ENCODE measurements at regions of chr16 and their contacts with region 1.

Region 1: GRCh38 chr16:56681939-56682702 is at the start of gene MT1X:
- DNase-seq: peak; percentile 95
- ATAC-seq: peak; percentile 97
- H3K4me3 Mint-ChIP-seq: peak within 1 kb of the TSS; percentile 86
- H3K27ac Mint-ChIP-seq: peak within 1 kb of the TSS; percentile 97
- H3K4me1 Mint-ChIP-seq: peaks cover 21% of the 10 kb centered on the region
- H3K27me3 Mint-ChIP-seq: no peaks in the 10 kb centered on the region
- CTCF ChIP-seq: no peak
- total RNA-seq, gene MT1X: 52.5 to 54.2 TPM

Region 2: DNA sequence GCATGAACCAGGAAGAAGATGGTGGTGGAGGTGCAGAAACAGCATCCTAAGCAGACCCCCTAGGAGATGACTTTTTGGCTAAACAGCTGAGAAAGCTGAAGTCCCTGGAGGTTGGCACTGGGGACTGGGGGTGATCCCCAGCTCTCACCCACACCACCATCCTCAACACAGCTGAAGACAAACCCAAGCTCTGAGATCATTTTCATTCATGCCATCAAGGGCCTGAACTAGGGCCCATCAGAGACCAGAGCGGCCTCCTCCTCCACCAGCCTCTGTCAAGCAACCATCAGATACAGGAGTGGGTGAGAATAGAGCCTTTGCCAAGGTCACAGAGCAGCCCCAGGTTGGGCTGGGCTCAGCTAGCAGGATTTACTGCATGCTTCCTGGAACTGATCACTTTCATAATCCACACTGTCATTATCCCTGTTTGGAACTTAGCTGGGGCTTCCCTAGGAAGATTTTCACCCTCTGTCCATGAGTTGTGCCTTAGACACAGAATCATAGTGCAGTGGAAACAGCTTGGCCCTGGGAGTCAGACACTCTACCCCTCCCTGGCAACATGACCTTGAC is 112.2 kb before region 1 on chr16:
- CTCF ChIA-PET with region 1: no interaction called
- POLR2A ChIA-PET with region 1: no interaction called
- intact Hi-C with region 1: no loop called
- DNase-seq: no peak
- ATAC-seq: no peak
- H3K4me3 Mint-ChIP-seq: no peak overlapping the region
- H3K27ac Mint-ChIP-seq: no peak overlapping the region
- H3K4me1 Mint-ChIP-seq: no peaks in the 10 kb centered on the region
- H3K27me3 Mint-ChIP-seq: peaks cover 2% of the 10 kb centered on the region
- CTCF ChIP-seq: no peak

Region 3: GRCh38 chr16:56608043-56608875 is 73.9 kb before region 1 on chr16 and contains the start of gene MT2A:
- CTCF ChIA-PET with region 1: interaction called, 3 read pairs
- POLR2A ChIA-PET with region 1: interaction called, 10 read pairs
- intact Hi-C with region 1: loop called (anchors 5 kb)
- DNase-seq: peak; percentile 97
- ATAC-seq: peak; percentile 77
- H3K4me3 Mint-ChIP-seq: peak within 1 kb of the TSS; percentile 81
- H3K27ac Mint-ChIP-seq: peak within 1 kb of the TSS; percentile 94
- H3K4me1 Mint-ChIP-seq: peaks cover 56% of the 10 kb centered on the region
- H3K27me3 Mint-ChIP-seq: no peaks in the 10 kb centered on the region
- CTCF ChIP-seq: no peak
- total RNA-seq, gene MT2A: 141 to 144 TPM

Region 4: GRCh38 chr16:56625140-56625942 is 56.8 kb before region 1 on chr16 and contains the start of gene MT1E:
- CTCF ChIA-PET with region 1: no interaction called
- POLR2A ChIA-PET with region 1: no interaction called
- intact Hi-C with region 1: no loop called
- DNase-seq: peak; percentile 74
- ATAC-seq: peak; percentile 92
- H3K4me3 Mint-ChIP-seq: peak within 1 kb of the TSS; percentile 78
- H3K27ac Mint-ChIP-seq: peak within 1 kb of the TSS; percentile 69
- H3K4me1 Mint-ChIP-seq: peaks cover 15% of the 10 kb centered on the region
- H3K27me3 Mint-ChIP-seq: peaks cover 25% of the 10 kb centered on the region
- CTCF ChIP-seq: no peak
- total RNA-seq, gene MT1E: 22.1 to 23.3 TPM

Region 5: DNA sequence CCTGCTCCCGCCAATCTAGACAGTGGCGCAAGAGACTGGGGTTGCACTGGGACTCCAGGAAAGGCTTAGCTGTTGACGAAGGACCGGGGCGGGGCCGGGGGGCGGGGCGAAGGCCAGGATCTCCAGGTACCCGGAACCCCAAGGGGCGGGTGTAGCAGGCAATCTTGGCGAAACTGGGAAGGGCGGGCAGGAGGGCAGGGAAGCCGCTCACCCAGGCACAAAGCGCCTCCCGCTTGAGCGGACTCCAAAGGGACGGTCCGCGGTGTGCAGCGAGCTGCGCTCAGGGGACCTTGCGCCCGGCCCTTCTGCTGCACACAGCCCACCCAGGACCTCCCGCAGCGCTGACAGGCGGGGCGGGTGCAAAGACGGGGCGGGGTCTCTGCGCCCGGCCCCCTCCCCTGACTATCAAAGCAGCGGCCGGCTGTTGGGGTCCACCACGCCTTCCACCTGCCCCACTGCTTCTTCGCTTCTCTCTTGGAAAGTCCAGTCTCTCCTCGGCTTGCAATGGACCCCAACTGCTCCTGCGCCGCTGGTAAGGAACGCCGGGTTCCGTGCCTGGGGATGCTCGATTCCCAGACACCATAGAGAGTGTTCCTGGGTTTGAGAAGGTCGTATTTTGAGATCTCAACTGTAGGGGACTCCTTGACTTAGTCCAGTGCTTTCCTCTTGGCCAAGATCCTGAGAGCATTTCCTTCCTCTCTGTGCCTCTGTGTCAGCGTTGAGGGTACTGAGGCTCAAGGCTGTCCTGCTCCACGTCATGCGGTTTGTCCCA is 24.4 kb before region 1 on chr16 and contains the start of gene MT1F:
- CTCF ChIA-PET with region 1: no interaction called
- POLR2A ChIA-PET with region 1: interaction called, 10 read pairs
- intact Hi-C with region 1: no loop called
- DNase-seq: peak; percentile 82
- ATAC-seq: peak; percentile 83
- H3K4me3 Mint-ChIP-seq: peak within 1 kb of the TSS; percentile 92
- H3K27ac Mint-ChIP-seq: peak within 1 kb of the TSS; percentile 82
- H3K4me1 Mint-ChIP-seq: peaks cover 14% of the 10 kb centered on the region
- H3K27me3 Mint-ChIP-seq: no peaks in the 10 kb centered on the region
- CTCF ChIP-seq: no peak
- total RNA-seq, gene MT1F: 7.7 to 9.0 TPM

Region 6: GRCh38 chr16:56667581-56668571 is 14.2 kb before region 1 on chr16 and contains the start of gene MT1G:
- CTCF ChIA-PET with region 1: interaction called, 11 read pairs
- POLR2A ChIA-PET with region 1: interaction called, 13 read pairs
- intact Hi-C with region 1: no loop called
- DNase-seq: peak; percentile 58
- ATAC-seq: peak; percentile 75
- H3K4me3 Mint-ChIP-seq: peak within 1 kb of the TSS; percentile 65
- H3K27ac Mint-ChIP-seq: no peak within 1 kb of the TSS
- H3K4me1 Mint-ChIP-seq: peaks cover 20% of the 10 kb centered on the region
- H3K27me3 Mint-ChIP-seq: peaks cover 72% of the 10 kb centered on the region
- CTCF ChIP-seq: no peak
- total RNA-seq, gene MT1G: 35.9 to 39.0 TPM

Measured in activated CD8-positive, alpha-beta T cell treated with anti-CD3 and anti-CD28 coated beads for 36 hours (primary cell).